Mammary epithelial cell (primary cell): ENCODE measurements at regions of chr15 and their contacts with region 1.

Region 1: GRCh38 chr15:73891328-73892315 is 18.3 kb downstream of the TBC1D21 start:
- DNase-seq: peak; percentile 22
- H3K4me3 ChIP-seq: no peak overlapping the region
- H3K27ac ChIP-seq: no peak overlapping the region
- H3K4me1 ChIP-seq: no peaks in the 10 kb centered on the region
- H3K27me3 ChIP-seq: no peaks in the 10 kb centered on the region
- CTCF ChIP-seq: no peak

Region 2: DNA sequence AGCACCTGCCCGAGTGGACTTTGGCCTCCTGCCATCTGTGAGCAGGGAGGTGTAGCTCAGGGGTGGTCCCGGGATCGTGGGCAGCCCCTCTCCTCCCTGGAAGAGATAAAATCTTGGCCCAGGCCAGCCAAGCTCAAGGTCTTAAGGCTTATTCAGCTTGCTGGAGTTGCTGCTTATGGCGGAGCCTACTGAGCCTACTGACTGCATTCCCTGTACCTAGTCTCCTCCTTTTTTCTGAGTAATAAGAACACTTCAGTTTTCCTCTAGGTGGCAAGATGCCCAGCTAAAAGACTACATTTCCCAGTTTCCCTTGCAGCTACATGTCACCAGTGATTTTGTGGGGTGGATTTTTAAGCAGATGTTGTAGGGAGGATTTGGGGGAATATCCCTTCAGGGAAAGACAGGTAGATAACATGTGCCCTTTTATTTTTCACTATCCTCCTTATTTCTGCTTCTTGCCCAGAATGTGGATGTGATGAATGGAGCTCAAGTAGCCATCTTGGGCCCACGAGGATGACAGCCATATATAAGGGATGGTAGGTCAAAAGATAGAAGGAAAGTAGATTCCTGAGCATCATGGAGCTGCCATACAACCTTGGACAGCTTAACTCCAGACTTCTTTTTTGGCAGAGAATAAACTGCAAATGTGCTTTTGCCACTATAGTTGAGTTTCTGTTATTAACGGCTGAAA is 97.0 kb before region 1 on chr15:
- CTCF ChIA-PET with region 1: no interaction called
- dilution Hi-C with region 1: loop called (anchors 5 kb)
- in situ Hi-C with region 1: no loop called
- intact Hi-C with region 1: no loop called
- DNase-seq: peak; percentile 44
- H3K4me3 ChIP-seq: no peak overlapping the region
- H3K27ac ChIP-seq: no peak overlapping the region
- H3K4me1 ChIP-seq: no peaks in the 10 kb centered on the region
- H3K27me3 ChIP-seq: no peaks in the 10 kb centered on the region
- CTCF ChIP-seq: no peak

Region 3: DNA sequence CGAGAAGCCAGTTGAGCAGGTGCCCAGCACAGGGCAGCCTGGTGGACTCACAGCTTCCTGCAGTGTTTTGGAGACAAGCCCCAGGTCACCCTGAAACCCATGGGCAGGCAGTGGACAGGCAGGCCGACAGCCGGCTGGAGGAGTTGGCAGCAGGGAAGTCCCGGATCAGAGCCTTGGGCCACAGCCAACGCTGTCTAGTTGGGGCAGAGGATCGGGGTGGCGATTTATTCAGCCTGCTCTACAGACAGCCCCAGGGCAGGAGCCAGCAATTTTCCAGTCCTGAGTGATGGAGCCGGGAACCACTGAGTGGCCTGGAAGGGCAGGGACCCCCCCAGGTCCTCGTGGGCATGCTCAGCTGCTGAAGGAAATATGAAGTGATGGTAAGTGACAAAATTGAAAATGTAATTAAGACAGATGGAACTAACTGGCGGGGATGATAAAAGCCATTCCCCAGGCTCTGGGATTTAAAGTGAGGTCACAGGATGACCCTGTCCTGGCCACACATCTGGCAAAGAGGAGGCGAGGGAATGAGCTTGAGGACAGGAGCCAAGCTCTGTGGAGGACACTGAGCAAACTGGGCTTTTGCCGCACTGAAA is 52.7 kb before region 1 on chr15:
- CTCF ChIA-PET with region 1: no interaction called
- dilution Hi-C with region 1: no loop called
- in situ Hi-C with region 1: no loop called
- intact Hi-C with region 1: no loop called
- DNase-seq: no peak
- H3K4me3 ChIP-seq: no peak overlapping the region
- H3K27ac ChIP-seq: no peak overlapping the region
- H3K4me1 ChIP-seq: no peaks in the 10 kb centered on the region
- H3K27me3 ChIP-seq: peaks cover 10% of the 10 kb centered on the region
- CTCF ChIP-seq: no peak

Region 4: GRCh38 chr15:73941044-73941443 is 49.4 kb after region 1 on chr15:
- CTCF ChIA-PET with region 1: no interaction called
- dilution Hi-C with region 1: no loop called
- in situ Hi-C with region 1: no loop called
- intact Hi-C with region 1: no loop called
- DNase-seq: no peak
- H3K4me3 ChIP-seq: no peak overlapping the region
- H3K27ac ChIP-seq: no peak overlapping the region
- H3K4me1 ChIP-seq: peaks cover 33% of the 10 kb centered on the region
- H3K27me3 ChIP-seq: no peaks in the 10 kb centered on the region
- CTCF ChIP-seq: no peak